Breast epithelium (tissue), 4 donors: ENCODE measurements at regions of chr4 and their contacts with region 1.

Region 1: DNA sequence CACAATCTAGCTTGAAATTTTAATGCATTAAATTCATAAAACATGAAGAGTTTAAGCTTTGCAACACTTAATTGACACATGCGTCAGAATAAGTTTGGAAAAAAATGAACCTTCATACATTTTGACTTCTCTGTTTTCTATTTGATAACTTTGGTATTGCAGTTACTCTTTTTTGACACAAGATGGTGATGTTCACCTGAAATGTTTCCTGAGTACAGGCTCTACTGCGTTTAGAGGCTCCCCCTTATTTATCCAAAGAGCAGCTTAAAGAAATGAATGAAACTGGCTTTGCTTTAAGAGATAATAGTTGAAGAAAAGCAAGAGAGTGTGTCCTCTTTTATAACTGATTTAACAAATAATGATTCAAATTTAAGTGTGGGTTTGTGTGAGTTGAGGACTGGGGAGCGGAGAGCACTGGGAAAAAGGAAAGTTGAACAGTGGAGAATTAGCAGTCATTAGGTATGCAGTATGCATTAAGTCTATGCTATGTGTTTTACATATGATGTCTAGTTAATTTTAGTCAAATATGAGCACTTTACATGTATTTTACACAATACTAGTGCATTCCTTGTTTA is 180.6 kb upstream of the NUDT6 start:
- DNase-seq: no peak
- H3K4me3 ChIP-seq: no peak overlapping the region
- H3K27ac ChIP-seq: no peak overlapping the region
- H3K4me1 ChIP-seq: no peaks in the 10 kb centered on the region
- H3K27me3 ChIP-seq: no peaks in the 10 kb centered on the region
- CTCF ChIP-seq: peak; percentile 68 to 84 (median 69)
- POLR2A ChIP-seq: no peak

Region 2: GRCh38 chr4:124262211-124263179 is 1159.5 kb after region 1 on chr4:
- intact Hi-C with region 1: loop called (anchors 10 kb)
- DNase-seq: peak; percentile 50 to 53
- H3K4me3 ChIP-seq: no peak overlapping the region
- H3K27ac ChIP-seq: peak overlapping the region in 1 of 2 donors; percentile 33
- H3K4me1 ChIP-seq: no peaks in the 10 kb centered on the region
- H3K27me3 ChIP-seq: no peaks in the 10 kb centered on the region
- CTCF ChIP-seq: peak; percentile 45 to 86 (median 74)
- POLR2A ChIP-seq: no peak